ENCODE measurements at regions of chr1 and their contacts with region 1.

Region 1: GRCh38 chr1:40078512-40079333 is 18.3 kb downstream of the PPT1 start:
- DNase-seq: peak; percentile 61
- ATAC-seq: peak; percentile 82
- H3K4me3 Mint-ChIP-seq: no peak overlapping the region
- H3K27ac Mint-ChIP-seq: peak overlapping the region; percentile 70
- H3K4me1 Mint-ChIP-seq: peaks cover 13% of the 10 kb centered on the region
- H3K27me3 Mint-ChIP-seq: no peaks in the 10 kb centered on the region

Region 2: DNA sequence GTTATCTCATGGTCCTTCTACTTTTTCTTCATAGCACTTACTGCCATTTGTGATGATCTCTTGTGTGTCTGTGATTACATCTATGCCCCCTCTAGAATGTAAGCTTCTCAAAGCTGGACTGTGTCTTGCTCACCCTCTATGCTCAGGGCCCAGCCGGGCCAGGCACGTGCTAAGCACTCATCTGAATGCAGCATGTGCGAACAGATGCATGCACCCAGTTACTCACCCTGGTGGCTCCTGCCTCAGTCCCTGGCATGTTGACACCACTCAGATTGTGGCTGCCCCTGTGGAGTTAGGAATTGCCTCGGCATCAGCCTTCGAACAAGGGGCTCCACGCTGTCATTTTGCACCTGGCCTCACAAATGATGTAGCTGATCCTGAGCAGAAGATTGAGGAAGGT is 482.6 kb before region 1 on chr1:
- CTCF ChIA-PET with region 1: no interaction called
- POLR2A ChIA-PET with region 1: no interaction called
- intact Hi-C with region 1: no loop called
- DNase-seq: no peak
- ATAC-seq: no peak
- H3K4me3 Mint-ChIP-seq: no peak overlapping the region
- H3K27ac Mint-ChIP-seq: no peak overlapping the region
- H3K4me1 Mint-ChIP-seq: peaks cover 19% of the 10 kb centered on the region
- H3K27me3 Mint-ChIP-seq: peaks cover 2% of the 10 kb centered on the region

Region 3: GRCh38 chr1:40059338-40059959 is 19.3 kb before region 1 on chr1:
- CTCF ChIA-PET with region 1: interaction called, 12 read pairs
- POLR2A ChIA-PET with region 1: interaction called, 3 read pairs
- intact Hi-C with region 1: no loop called
- DNase-seq: peak; percentile 46
- ATAC-seq: peak; percentile 54
- H3K4me3 Mint-ChIP-seq: peak overlapping the region; percentile 60
- H3K27ac Mint-ChIP-seq: peak overlapping the region; percentile 90
- H3K4me1 Mint-ChIP-seq: peaks cover 88% of the 10 kb centered on the region
- H3K27me3 Mint-ChIP-seq: no peaks in the 10 kb centered on the region

Region 4: DNA sequence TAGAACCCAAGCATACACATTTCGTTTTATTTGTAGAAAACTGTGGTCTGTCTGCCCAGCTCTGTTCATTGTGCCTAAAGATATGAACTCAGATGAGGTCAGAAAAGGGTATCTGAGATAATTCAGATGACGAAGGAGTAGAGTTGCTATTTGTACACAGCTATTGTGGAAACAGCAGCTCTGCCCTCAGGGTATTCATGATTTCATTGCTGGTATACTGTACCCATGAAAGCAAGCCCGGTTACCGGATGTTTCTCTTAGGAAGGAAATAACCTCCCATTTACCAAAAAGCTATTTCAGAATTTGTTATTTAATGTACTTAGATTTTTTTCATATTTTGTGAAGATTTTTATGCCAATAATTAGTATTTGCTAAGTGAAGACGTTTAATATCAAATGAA is 332.6 kb after region 1 on chr1:
- CTCF ChIA-PET with region 1: no interaction called
- POLR2A ChIA-PET with region 1: no interaction called
- intact Hi-C with region 1: loop called in 1 of 2 experiments (anchors 5 kb)
- DNase-seq: no peak
- ATAC-seq: no peak
- H3K4me3 Mint-ChIP-seq: no peak overlapping the region
- H3K27ac Mint-ChIP-seq: no peak overlapping the region
- H3K4me1 Mint-ChIP-seq: peaks cover 21% of the 10 kb centered on the region
- H3K27me3 Mint-ChIP-seq: no peaks in the 10 kb centered on the region